ENCODE measurements at regions of chr12 and their contacts with region 1.

Region 1: DNA sequence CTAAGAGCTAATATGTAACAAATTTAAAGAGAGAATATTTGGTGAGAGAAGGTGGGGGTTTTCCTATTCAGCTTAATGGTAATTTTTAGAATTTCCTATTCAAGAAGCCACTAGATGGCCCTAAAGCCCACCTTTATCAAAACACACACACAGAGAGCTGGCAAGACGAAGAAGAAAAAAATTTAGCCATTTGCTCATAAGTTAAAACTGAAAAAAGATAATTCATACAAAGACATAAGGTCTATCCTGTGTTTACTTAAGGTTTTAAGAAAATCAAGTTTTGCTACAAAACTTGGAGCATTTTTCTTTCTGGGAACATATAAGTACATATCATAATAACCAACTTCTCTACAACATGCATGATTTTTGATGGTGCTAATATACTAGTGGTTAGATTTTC is 46.8 kb upstream of the PCED1B start:
- DNase-seq: no peak
- ATAC-seq: peak; percentile 64
- H3K4me3 ChIP-seq: no peak overlapping the region
- H3K27ac ChIP-seq: no peak overlapping the region
- H3K4me1 ChIP-seq: no peaks in the 10 kb centered on the region
- H3K27me3 ChIP-seq: no peaks in the 10 kb centered on the region

Region 2: DNA sequence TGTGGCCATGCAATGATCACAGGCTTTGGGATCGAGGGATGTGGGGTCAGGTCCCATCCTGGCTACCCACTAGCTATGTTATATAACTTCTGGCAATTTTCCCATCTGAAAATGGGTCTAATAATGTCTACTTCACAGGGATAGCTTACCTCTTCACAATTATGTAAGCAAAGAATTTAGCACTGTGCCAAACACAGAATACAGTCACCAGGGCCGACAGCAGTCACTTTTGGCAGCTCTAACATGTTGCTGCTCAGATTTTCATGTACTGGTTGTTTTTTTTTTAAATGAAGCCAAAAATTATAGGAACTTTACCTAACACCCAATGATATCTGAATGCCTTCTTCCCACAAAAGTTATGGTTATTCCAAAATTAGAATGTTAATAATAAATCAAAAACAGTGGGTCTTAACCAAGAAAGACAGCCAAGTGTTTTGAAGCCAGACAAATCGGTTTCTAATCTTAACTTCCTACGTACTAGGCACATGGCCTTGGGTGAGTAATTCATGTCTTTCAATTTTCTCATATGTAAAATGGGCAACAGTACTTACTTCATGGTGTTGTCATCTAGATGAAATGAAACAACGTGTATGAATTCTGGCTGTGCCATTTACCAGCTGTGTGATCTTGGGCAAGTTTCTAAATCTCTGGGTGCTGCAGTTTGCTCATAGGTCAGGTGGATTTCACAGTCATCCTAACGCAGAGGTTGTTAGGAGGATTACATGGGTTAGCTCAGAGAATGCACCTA is 33.8 kb after region 1 on chr12:
- intact Hi-C with region 1: loop called in 1 of 2 experiments (anchors 5 kb)
- DNase-seq: no peak
- ATAC-seq: peak; percentile 72
- H3K4me3 ChIP-seq: no peak overlapping the region
- H3K27ac ChIP-seq: peak overlapping the region in 1 of 2 donors; percentile 58
- H3K4me1 ChIP-seq: peaks cover 0 to 4% of the 10 kb centered on the region in 2 donors
- H3K27me3 ChIP-seq: no peaks in the 10 kb centered on the region

Region 3: DNA sequence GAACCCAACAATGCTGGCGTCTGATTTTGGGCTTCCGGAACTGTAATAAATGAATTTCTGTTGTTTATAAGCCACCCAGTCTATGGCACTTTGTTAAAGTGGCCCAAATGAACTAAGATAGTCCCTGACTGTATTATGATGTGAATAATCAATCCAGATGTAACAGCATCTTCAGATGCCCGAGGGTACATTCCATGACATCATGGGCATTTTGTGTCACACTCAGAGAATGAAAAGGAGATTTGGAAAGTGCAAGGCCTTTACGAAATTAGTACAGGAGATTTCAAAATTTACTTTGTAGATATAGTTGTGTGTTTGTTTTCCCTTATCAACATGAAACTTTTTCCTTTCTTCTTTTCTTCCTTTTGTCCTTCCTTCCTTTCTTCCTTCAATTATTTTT is 101.3 kb after region 1 on chr12:
- intact Hi-C with region 1: no loop called
- DNase-seq: no peak
- ATAC-seq: no peak
- H3K4me3 ChIP-seq: no peak overlapping the region
- H3K27ac ChIP-seq: no peak overlapping the region
- H3K4me1 ChIP-seq: no peaks in the 10 kb centered on the region
- H3K27me3 ChIP-seq: no peaks in the 10 kb centered on the region

Region 4: GRCh38 chr12:47277972-47278448 is 245.4 kb after region 1 on chr12:
- intact Hi-C with region 1: no loop called
- DNase-seq: no peak
- ATAC-seq: no peak
- H3K4me3 ChIP-seq: no peak overlapping the region
- H3K27ac ChIP-seq: no peak overlapping the region
- H3K4me1 ChIP-seq: peaks cover 2 to 3% of the 10 kb centered on the region in 2 donors
- H3K27me3 ChIP-seq: no peaks in the 10 kb centered on the region

Region 5: DNA sequence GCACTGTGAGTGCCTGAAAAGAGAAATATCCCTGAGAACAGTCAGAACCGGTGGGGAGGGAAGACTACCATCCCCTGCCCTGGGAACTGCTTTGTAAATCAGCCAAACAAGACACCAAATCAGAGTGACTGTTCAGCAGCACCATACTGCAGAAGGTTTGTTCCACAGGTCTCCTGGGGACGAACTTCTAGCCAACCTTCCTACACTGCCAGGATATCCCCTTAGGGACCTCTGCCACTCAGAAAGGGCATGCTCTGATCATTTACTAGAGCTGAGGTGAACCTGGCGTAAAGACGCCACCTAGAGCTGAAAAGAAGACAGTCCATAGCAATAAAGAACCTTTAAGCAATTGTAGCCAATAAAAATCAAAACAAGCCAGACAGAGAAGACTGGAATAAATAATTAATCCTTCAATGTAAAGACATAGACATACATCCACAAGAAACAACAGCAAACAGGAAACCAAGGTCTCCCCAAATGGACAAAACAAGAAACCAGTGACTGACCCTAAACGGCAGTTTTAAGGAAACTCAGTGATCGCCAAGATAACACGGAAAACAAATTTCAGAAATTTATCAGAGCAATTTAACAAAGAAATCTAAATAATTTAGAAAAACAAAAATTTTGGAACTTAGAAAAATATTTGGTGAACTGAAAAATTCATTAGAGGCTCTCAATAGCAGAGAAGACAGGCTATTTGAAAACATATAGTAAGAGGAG is 275.2 kb after region 1 on chr12:
- intact Hi-C with region 1: loop called (anchors 2 to 5 kb)
- DNase-seq: no peak
- ATAC-seq: peak; percentile 82
- H3K4me3 ChIP-seq: no peak overlapping the region
- H3K27ac ChIP-seq: no peak overlapping the region
- H3K4me1 ChIP-seq: no peaks in the 10 kb centered on the region
- H3K27me3 ChIP-seq: no peaks in the 10 kb centered on the region

Region 6: DNA sequence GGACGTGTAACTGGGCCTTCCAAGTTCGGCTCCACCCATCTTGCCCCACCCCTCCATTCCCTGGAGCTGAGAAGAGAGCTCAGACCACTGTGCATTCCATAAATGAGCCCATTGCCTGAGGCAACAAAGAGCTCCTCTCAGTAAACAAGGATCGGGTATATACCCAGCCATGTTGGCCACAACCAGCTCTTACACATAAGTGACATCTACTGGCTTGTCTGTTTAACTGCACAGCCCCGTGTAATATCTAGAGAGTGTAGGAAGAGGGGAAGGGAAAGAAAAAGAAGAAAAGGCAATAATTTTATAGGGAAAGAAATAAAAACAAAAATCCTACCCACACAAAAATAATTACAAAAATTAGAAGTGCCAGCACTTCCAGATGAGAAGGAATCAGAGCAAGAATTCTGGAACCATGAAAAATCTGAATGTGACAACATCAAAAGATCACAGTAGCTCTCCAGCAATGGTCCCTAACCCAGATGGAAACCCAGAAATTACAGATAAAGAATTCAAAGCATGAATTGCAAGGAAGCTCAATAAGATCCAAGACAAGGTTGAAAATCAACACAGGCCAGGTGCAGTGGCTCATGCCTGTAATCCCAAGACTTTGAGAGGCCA is 365.1 kb after region 1 on chr12:
- intact Hi-C with region 1: loop called (anchors 10 kb)
- DNase-seq: no peak
- ATAC-seq: peak; percentile 66
- H3K4me3 ChIP-seq: no peak overlapping the region
- H3K27ac ChIP-seq: no peak overlapping the region
- H3K4me1 ChIP-seq: no peaks in the 10 kb centered on the region
- H3K27me3 ChIP-seq: no peaks in the 10 kb centered on the region

Region 7: GRCh38 chr12:47686645-47687240 is 654.1 kb after region 1 on chr12:
- intact Hi-C with region 1: loop called (anchors 2 to 10 kb)
- DNase-seq: no peak
- ATAC-seq: no peak
- H3K4me3 ChIP-seq: no peak overlapping the region
- H3K27ac ChIP-seq: no peak overlapping the region
- H3K4me1 ChIP-seq: no peaks in the 10 kb centered on the region
- H3K27me3 ChIP-seq: no peaks in the 10 kb centered on the region